Dendritic cell treated with granulocyte-macrophage colony-stimulating factor and Interleukin-4, amounts not matched to agents 40 ng/mL and 50 ng/mL, for 4 days (primary cell): ENCODE measurements at regions of chr17 and their contacts with region 1.

Region 1: DNA sequence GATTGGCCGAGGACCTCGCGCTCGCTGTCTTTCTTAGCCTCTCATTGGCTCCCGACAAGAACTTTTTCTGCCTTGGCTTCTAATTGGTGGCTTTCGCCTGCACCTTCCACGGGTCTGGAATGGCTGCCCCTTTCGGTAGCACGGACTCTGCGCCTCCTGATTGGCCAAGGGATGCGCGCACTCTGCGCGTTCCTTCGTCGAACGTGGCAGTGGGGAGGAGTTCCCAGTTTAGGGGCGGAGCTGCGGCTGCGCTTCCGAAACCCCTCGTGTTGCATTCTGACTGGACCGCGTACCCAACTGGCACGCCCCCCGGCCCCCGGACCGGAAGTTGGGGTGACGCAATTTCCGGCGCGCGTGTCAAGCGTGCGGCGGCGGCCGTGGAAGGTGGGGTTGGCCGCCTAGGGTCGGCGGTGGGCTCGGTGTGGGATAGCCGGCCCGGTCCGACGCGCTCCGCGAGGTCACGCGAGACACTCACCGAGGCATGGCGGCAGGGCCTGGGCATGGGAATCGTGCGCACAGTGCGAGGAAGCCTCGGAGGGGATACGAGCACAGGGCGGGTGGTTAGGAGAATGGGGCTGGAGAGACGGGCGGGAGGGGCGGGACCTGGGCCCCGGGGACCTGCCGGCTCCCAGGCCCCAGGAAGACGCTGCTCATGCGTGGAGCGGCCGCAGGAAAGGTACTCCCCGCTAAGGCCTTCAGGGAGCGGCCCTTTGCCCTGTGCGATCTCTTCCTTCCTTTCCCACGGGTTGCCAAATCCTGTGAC is 602 bp upstream of the P4HB start:
- H3K4me3 Mint-ChIP-seq: peak overlapping the region; percentile 97
- H3K27ac Mint-ChIP-seq: peak overlapping the region; percentile 98
- H3K4me1 Mint-ChIP-seq: peaks cover 48% of the 10 kb centered on the region
- H3K27me3 Mint-ChIP-seq: no peaks in the 10 kb centered on the region

Region 2: DNA sequence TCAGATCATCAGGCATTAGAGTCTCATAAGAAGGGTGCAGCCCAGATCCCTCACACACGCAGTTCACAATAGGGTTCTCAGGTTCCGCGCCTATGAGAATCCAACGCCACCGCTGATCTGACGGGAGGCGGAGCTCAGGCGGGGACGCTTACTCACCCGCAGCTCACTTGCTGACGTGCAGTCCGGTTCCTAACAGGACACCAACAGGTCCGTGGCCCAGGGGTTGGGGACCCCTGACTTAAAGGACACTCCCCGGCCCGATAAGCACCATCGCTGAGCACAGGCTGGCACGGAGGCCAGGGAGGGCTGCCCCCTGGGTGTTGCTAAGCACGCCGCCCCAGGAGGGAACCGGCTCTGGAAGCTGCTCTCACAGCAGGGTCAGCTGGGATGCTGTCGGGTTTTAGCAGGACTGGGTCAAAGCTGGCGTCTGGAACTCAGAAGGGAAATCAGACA is 495.8 kb before region 1 on chr17:
- intact Hi-C with region 1: no loop called
- H3K4me3 Mint-ChIP-seq: peak overlapping the region; percentile 72
- H3K27ac Mint-ChIP-seq: peak overlapping the region; percentile 70
- H3K4me1 Mint-ChIP-seq: peaks cover 39% of the 10 kb centered on the region
- H3K27me3 Mint-ChIP-seq: peaks cover 92% of the 10 kb centered on the region

Region 3: GRCh38 chr17:81821603-81822311 is 39.2 kb before region 1 on chr17:
- intact Hi-C with region 1: loop called (anchors 5 kb)
- H3K4me3 Mint-ChIP-seq: peak overlapping the region; percentile 48
- H3K27ac Mint-ChIP-seq: peak overlapping the region; percentile 95
- H3K4me1 Mint-ChIP-seq: peaks cover 43% of the 10 kb centered on the region
- H3K27me3 Mint-ChIP-seq: peaks cover 17% of the 10 kb centered on the region

Region 4: DNA sequence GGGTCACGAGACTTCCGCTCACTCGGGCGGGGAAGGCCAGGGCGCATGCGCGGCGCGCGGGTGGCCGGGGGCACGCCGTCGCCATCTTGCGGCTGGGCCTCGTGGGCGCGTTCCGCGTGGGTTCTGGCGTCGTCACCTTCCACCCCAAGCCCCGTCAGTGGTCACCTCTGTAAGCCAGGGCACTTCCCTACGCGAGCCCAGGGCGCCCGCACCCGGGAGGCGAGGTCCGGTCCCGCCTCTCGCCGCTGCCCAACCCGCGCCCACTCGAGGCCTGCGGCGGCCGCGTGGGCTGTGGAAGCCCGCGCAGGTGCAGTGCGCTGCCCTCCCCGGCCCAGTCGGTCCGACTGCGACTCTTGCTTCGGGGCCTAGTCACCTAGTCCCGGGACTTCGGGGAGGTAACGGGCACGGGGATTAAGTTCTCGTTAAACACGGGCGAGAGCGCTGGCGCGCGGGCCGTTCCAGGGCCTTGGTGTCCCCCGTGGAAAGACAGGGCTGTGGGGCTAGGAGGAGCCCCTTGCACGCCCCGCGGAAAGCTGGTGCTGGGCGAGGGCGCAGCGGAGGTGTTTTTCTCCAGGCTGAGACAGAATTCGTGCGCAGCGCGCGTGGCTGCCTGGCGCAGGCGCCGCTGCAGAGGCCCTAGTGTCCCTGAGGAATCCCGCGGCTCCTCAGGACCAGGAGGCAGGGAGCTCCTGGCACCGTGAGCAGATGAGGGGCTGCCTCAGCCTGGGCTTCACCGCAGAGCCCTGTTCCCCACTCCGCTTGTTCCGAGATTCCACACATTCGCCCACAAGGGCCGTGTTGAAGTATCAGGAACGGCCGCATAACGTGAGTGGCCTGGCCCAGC is 10.7 kb after region 1 on chr17:
- intact Hi-C with region 1: loop called (anchors 1 kb)
- H3K4me3 Mint-ChIP-seq: peak overlapping the region; percentile 81
- H3K27ac Mint-ChIP-seq: peak overlapping the region; percentile 95
- H3K4me1 Mint-ChIP-seq: peaks cover 50% of the 10 kb centered on the region
- H3K27me3 Mint-ChIP-seq: no peaks in the 10 kb centered on the region

Region 5: DNA sequence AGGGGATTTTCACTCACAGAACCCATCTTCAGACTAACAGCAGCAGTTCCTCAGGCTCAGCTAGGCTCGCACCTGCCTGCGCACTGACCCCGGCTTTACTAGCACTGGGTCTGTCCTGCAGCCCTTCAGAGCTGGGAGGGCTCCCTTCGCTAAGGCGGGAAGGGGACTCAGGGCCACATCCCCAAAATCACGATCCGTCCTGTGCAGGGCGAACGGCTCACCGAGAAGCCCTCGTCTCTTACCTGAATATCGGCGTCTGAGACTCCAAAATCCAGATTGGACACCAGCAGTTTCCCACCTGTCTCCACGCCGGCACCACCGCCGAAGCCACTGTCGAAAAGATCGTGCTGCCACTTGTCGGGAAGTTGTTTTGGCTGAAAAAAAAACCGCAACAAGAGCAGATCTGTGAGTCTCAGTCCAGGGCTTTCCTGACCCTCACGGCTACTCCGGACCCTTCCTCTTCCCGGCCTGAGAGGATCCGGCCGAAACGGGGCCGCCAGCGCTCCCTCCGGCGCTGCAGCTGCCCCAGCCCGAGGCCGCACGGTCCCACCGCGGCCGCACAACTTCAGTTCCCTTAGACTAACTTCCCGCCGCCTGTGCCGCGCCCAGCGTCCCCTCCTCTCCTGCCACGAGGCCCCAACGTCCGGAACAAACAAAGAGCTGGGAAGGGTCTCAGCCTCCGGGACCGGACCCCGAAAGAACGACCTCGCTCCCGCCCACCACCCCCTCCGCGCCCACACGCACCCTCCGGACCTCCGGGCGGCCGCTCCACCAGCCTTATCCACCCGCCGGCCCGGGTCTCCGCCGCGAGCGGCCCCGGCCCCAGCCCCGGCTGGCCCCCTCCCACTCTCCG is 29.7 kb after region 1 on chr17:
- intact Hi-C with region 1: loop called (anchors 1 kb)
- H3K4me3 Mint-ChIP-seq: peak overlapping the region; percentile 86
- H3K27ac Mint-ChIP-seq: peak overlapping the region; percentile 98
- H3K4me1 Mint-ChIP-seq: peaks cover 46% of the 10 kb centered on the region
- H3K27me3 Mint-ChIP-seq: no peaks in the 10 kb centered on the region

Region 6: GRCh38 chr17:81927653-81928543 is 67.0 kb after region 1 on chr17 and contains the start of gene MAFG:
- intact Hi-C with region 1: loop called (anchors 10 kb)
- H3K4me3 Mint-ChIP-seq: peak within 1 kb of the TSS; percentile 93
- H3K27ac Mint-ChIP-seq: peak within 1 kb of the TSS; percentile 90
- H3K4me1 Mint-ChIP-seq: peaks cover 54% of the 10 kb centered on the region
- H3K27me3 Mint-ChIP-seq: peaks cover 46% of the 10 kb centered on the region

Region 7: DNA sequence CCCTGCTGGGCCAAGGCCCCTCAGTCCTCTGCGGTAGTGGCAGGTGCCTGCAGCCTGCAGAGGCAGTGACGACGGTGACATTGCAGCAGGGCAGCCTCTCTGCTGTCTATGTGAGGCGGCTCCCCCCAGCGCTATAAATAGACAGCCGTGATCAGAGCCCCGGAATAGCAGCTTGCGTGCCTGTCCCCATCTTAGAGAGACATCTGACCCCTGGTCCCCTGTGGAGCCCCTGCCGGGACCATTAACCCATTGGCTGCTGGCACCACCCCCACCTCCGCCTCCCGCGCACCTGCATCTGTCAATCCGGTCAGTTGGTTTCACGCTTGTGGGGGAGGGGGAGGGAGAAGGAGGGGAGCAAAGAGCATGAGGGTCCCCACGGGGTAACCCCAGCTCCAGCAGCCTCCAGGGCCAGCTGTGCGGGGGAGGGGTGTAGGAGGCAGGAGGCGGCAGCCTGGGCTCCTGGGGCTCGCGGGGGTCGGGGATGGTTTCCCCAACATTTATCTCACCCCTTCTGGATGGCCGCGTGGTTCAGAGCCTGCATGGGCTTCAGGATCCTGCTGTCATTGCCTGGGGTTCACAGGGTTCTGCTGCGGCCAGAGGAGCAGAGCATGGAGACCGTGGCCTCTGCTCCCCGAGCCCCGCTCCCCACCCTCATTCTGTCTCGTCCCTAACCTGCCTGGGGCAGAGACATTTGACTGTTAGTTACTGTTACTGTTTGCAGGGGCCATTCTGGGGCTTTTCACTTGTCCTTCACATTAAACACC is 81.0 kb after region 1 on chr17:
- intact Hi-C with region 1: no loop called
- H3K4me3 Mint-ChIP-seq: no peak overlapping the region
- H3K27ac Mint-ChIP-seq: no peak overlapping the region
- H3K4me1 Mint-ChIP-seq: peaks cover 6% of the 10 kb centered on the region
- H3K27me3 Mint-ChIP-seq: peaks cover 68% of the 10 kb centered on the region